ENCODE measurements at regions of chr10 and their contacts with region 1.

Region 1: DNA sequence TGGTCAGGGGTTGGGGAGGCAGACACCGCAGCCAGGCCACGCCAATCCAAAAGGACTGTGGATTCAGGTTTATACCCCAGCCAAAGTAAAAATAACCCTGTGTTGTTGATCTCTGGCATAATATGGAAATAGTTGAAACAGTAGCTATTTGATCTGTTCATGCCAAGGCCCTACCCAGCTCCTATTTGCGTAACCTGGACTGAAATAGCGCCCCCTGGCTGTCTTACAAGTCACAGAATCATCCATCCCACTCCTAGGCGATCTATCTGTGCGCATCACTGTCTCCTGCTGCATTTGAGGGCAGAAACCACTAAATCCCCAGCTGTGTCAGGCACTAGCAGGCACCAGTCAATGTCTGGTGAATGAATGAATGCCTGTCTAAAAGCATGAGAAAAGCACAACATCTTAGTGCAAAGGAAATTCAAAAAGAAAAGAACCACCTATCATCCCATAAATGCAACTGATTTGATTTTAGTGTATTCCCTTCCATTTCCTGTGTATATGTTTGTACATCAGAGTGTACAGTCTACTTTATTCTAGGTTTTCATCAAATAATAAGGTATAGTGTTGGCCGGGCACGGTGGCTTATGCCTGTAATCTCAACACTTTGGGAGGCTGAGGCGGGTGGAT is 160.0 kb downstream of the SLIT1 start:
- DNase-seq: peak; percentile 55 to 73
- ATAC-seq: peak; percentile 53
- H3K4me3 ChIP-seq: no peak overlapping the region
- H3K27ac ChIP-seq: peak overlapping the region in 1 of 2 donors; percentile 69
- H3K4me1 ChIP-seq: no peaks in the 10 kb centered on the region
- H3K27me3 ChIP-seq: no peaks in the 10 kb centered on the region

Region 2: DNA sequence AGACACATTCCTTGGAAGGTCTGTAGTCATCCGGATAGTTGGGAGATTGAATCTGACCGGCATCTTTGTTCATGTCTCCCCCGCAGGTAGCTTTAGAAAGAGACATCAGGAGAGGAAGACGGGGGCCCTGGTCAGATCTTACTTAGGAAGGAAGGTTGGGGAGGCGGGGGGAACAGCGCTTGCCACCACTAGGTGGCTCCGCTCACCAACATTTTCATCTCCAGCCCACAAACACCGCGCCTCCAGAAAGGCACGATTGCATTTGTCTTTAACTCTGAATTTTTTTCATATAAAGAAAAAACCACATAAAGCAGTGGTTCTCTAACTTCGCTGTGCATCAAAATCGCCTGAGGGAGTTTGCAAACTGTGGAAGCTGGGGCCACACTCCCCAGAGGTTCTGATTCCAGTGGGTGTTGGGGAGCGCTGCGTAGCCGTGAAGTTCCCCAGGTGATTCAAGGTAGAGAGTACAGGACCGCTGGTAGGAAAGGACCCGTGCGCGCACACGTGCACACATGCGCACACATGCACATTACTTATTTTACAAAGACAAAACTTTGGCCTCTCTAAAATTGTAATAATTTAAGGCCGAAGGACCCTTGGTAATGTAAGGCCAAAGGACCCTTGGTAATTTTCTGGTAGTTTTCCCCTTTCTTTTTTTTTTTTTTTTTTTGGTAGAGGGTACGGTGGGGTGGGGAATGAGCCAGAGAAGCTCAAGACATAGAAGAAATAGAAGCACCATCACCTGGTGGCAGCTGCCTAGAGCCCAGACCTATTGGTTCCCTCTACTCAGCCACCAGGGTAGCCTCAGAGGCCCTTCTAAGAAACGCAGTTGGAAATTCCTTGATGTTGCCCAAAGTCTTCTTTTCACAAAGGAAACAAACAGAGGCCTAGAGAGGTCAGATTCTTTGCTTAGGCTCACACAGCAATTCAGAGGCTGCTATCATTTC is 629.5 kb before region 1 on chr10:
- intact Hi-C with region 1: loop called in 1 of 2 experiments (anchors 10 kb)
- DNase-seq: peak; percentile 75 to 83
- ATAC-seq: peak; percentile 69
- H3K4me3 ChIP-seq: no peak overlapping the region
- H3K27ac ChIP-seq: no peak overlapping the region
- H3K4me1 ChIP-seq: no peaks in the 10 kb centered on the region
- H3K27me3 ChIP-seq: no peaks in the 10 kb centered on the region

Region 3: DNA sequence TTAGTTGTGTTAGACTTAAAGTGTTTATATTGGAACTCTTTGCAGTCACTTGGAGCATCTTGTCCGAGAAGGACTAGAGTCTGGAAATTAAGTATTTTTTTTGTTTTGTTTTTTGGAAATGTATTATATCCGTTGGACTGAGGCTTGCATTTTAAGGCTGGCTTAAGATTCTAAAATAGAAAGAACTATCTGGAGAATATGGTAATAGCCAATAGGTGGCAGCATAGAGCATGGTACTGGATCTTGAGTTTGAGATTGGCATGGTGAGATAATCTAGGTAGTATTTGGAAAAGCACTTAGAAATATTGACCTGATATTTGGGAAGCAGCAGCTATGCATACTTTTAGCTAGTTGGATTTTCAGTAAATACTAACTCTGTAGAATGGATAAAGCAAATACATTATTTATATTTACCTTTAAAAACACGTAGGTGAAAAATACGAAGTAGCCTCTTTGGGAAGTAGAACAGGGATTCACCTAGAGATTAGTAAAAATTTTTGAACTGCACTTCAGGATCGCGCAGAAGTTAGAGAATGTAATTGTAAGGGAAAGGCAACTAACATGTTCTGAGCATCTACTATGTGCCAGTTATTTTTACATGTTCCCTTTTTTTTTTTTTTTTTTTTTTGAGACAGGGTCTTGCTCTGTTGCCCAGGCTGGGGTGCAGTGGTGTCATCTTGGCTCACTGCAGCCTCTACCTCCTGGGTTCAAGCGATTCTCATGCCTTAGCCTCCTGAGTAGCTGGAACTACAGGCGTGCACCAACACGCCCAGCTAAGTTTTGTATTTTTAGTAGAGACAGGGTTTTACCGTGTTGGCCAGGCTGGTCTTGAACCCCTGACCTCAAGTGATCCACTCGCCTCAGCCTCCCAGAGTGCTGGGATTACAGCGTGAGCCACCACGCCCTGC is 115.0 kb before region 1 on chr10:
- intact Hi-C with region 1: loop called (anchors 5 to 10 kb)
- DNase-seq: no peak
- ATAC-seq: peak; percentile 73
- H3K4me3 ChIP-seq: no peak overlapping the region
- H3K27ac ChIP-seq: no peak overlapping the region
- H3K4me1 ChIP-seq: no peaks in the 10 kb centered on the region
- H3K27me3 ChIP-seq: no peaks in the 10 kb centered on the region

Measured in aorta (tissue), 5 donors.